OCI-LY7 (cell line): ENCODE measurements at regions of chr2 and their contacts with region 1.

Region 1: GRCh38 chr2:241629762-241630435 is 7.1 kb downstream of the THAP4 start:
- DNase-seq: no peak
- H3K4me3 ChIP-seq: no peak overlapping the region
- H3K27ac ChIP-seq: no peak overlapping the region
- H3K4me1 ChIP-seq: peaks cover under 1% of the 10 kb centered on the region
- CTCF ChIP-seq: no peak

Region 2: DNA sequence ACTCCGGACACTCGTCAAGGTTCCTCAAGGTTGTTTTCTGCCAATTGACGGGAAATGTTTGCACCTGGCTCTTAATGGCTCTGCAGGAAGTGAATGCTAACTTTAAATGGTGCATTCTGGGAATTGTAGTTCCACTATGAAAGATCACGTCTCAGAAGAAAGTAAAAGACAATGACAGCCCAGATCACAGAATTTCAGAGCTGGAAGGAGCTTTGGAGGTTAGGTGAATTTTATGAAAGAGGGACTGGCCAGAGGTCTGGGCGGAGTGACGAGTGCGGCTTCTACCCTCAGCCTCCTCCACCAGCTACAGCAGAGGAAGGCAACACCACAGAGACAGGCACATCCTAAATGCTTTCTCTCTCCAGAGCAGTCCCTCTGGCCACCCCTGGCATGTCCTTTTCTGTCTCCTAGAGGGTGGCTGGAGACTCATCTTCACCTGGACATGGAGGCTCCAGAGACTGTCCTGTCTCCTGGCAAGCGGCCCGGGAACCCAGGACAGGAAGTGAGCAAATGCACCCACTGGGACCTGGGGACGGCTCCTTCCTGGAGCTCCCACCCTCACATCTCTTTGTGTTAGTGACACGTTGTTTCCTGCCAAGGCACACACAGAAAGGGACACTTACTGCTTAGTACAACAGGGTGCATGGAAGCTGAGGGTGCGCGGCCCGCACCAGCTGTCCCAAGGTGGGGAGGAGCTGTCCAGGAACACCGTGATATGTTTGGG is 12.3 kb before region 1 on chr2:
- CTCF ChIA-PET with region 1: no interaction called
- POLR2A ChIA-PET with region 1: interaction called, 11 read pairs
- intact Hi-C with region 1: no loop called
- DNase-seq: peak; percentile 80
- H3K4me3 ChIP-seq: peak overlapping the region; percentile 54
- H3K27ac ChIP-seq: peak overlapping the region; percentile 66
- H3K4me1 ChIP-seq: peaks cover 22% of the 10 kb centered on the region
- CTCF ChIP-seq: no peak

Region 3: GRCh38 chr2:241734467-241735208 is 104.7 kb after region 1 on chr2 and contains the start of gene D2HGDH:
- CTCF ChIA-PET with region 1: no interaction called
- POLR2A ChIA-PET with region 1: no interaction called
- intact Hi-C with region 1: no loop called
- DNase-seq: peak; percentile 90
- H3K4me3 ChIP-seq: peak within 1 kb of the TSS; percentile 81
- H3K27ac ChIP-seq: peak within 1 kb of the TSS; percentile 48
- H3K4me1 ChIP-seq: peaks cover 22% of the 10 kb centered on the region
- CTCF ChIP-seq: no peak
- total RNA-seq, gene D2HGDH: 19.4 and 23.2 TPM in 2 replicates

Region 4: GRCh38 chr2:242060212-242060835 is 430.4 kb after region 1 on chr2:
- CTCF ChIA-PET with region 1: no interaction called
- POLR2A ChIA-PET with region 1: no interaction called
- intact Hi-C with region 1: no loop called
- DNase-seq: no peak
- H3K4me3 ChIP-seq: no peak overlapping the region
- H3K27ac ChIP-seq: no peak overlapping the region
- H3K4me1 ChIP-seq: no peaks in the 10 kb centered on the region
- CTCF ChIP-seq: no peak